H1 (cell line): ENCODE measurements at regions of chr11 and their contacts with region 1.

Region 1: GRCh38 chr11:59802639-59803176 is 7.9 kb downstream of the MRPL16 start:
- DNase-seq: no peak
- H3K4me3 ChIP-seq: no peak overlapping the region
- H3K27ac ChIP-seq: no peak overlapping the region
- H3K4me1 ChIP-seq: no peaks in the 10 kb centered on the region
- H3K27me3 ChIP-seq: no peaks in the 10 kb centered on the region
- CTCF ChIP-seq: peak in 2 of 3 experiments; percentile 42 to 44; a peak in 2 of 4 replicates
- EP300 ChIP-seq: no peak
- POLR2A ChIP-seq: no peak
- RAD21 ChIP-seq: peak; percentile 69 to 72

Region 2: GRCh38 chr11:59791639-59792038 is 11.1 kb before region 1 on chr11:
- CTCF ChIA-PET with region 1: interaction called, 12 read pairs
- POLR2A ChIA-PET with region 1: interaction called, 5 read pairs
- DNase-seq: no peak
- H3K4me3 ChIP-seq: no peak overlapping the region
- H3K27ac ChIP-seq: no peak overlapping the region
- H3K4me1 ChIP-seq: no peaks in the 10 kb centered on the region
- H3K27me3 ChIP-seq: no peaks in the 10 kb centered on the region
- CTCF ChIP-seq: no peak
- EP300 ChIP-seq: no peak
- POLR2A ChIP-seq: no peak
- RAD21 ChIP-seq: no peak